HepG2 (cell line): ENCODE measurements at regions of chr3 and their contacts with region 1.

Region 1: DNA sequence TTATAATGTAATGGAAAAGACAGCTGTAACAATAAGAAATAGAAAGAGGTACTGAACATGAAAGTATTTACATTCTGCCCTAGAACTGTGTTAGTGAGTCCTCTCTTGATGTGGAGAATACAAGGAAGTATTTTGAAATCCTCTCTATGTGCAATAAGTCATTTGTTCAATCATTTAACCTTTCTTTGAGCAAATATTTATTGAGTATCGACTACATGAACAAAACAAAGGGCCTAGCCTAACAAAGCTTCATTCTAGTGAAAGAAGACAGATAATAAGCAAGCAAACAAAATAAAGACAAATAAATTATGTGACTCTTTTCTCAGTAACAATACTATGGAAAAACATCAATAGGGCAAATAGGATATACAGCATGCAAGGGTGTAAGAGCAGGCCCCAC is 354.9 kb upstream of the ATP11B start:
- DNase-seq: peak; percentile 2
- ATAC-seq: no peak
- H3K4me3 ChIP-seq: no peak overlapping the region
- H3K27ac ChIP-seq: no peak overlapping the region
- H3K4me1 ChIP-seq: no peaks in the 10 kb centered on the region
- H3K27me3 ChIP-seq: no peaks in the 10 kb centered on the region
- CTCF ChIP-seq: no peak
- EP300 ChIP-seq: no peak
- POLR2A ChIP-seq: no peak
- RAD21 ChIP-seq: no peak

Region 2: DNA sequence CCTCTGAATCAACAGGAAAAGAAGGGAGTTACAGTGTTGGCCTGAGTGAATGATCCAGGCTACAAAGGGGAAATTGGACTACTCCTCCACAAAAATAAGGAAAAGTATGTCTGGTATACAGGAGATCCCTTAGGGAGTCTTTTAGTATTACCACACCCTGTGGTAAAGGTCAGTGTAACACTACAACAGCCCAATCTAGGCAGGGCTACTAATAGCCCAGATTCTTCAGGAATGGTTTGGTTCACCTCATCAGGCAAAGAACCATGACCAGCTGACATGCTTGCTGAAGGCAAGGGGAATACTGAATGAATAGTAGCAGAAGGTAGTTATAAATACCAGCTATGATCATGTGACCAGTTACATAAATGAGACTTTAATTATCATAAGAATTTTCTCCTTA is 17.7 kb before region 1 on chr3:
- CTCF ChIA-PET with region 1: no interaction called
- POLR2A ChIA-PET with region 1: no interaction called
- in situ Hi-C with region 1: no loop called
- intact Hi-C with region 1: loop called (anchors 2 kb)
- DNase-seq: no peak
- ATAC-seq: no peak
- H3K4me3 ChIP-seq: no peak overlapping the region
- H3K27ac ChIP-seq: no peak overlapping the region
- H3K4me1 ChIP-seq: no peaks in the 10 kb centered on the region
- H3K27me3 ChIP-seq: no peaks in the 10 kb centered on the region
- CTCF ChIP-seq: no peak
- EP300 ChIP-seq: no peak
- POLR2A ChIP-seq: no peak
- RAD21 ChIP-seq: no peak